MCF 10A (cell line): ENCODE measurements at regions of chr9 and their contacts with region 1.

Region 1: DNA sequence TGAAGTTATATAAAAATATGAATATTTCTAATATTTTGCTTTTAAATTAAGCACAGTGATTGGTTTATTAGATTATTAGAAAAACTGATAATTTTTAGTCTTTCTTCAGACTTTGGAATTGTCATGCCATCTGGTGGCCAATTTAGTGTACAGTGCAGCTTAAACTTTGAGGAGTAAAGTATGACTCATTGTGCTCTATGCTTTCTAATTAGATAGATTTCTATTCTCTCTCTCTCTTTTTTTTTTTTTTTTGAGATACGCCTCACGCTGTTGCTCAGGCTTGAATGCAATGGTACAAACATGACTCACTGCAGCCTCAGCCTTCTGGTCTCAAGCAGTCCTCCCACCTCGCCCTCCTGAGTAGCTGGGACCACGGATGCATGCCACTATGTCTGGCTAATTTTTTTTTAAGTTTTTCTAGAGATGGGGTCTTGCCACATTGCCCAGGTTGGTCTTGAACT is 42.1 kb upstream of the GPR21 start:
- DNase-seq: peak; percentile 79
- H3K4me3 Mint-ChIP-seq: no peak overlapping the region
- H3K27ac Mint-ChIP-seq: no peak overlapping the region
- H3K4me1 Mint-ChIP-seq: no peaks in the 10 kb centered on the region
- H3K27me3 Mint-ChIP-seq: no peaks in the 10 kb centered on the region
- CTCF ChIP-seq: peak; percentile 68

Region 2: DNA sequence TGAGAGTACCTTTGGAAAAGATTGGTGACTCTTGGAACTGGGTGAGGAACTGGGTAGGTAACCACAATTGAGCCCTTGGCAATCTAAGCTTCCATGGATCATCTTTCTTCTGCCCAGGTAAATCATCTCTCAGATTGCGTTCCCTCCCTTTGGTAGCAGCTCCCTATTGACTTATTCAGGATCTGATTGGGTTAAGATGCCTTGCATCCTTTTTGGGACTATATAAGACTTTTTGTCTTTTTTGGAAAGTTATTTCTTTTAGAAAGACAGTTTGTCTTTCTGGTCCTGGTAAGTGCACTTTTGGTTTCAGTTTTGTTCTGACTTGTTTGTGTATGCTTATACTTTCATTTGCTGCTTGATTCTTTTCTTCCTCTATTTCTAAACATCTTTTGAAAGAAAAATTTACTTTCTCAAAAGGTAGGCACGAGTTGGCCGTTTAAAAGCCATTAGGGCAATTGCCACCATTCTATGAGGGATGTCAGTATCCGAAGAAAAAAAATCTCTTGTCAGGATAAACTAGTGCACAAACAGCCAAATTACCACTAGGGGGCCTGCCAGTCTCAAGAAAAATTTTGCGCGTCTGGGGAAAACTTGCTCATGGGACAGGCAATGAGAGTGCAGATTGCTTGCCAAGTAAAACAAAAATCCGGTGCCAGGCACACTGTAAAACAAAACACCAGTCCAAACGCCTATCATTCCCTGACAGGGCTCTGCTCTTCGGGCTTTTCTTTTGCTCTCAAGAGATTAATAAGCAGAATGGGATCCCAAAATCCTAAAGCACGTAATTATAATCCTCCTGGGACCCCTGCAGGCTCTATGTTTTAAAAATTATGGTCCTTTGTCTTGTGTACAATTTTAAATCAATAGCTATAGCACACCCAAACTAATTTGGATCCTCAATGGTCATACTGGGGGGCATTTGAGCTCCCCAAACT is 526.5 kb before region 1 on chr9:
- CTCF ChIA-PET with region 1: no interaction called
- POLR2A ChIA-PET with region 1: no interaction called
- intact Hi-C with region 1: loop called (anchors 1 kb)
- DNase-seq: peak; percentile 95
- H3K4me3 Mint-ChIP-seq: peak overlapping the region; percentile 71
- H3K27ac Mint-ChIP-seq: peak overlapping the region; percentile 41
- H3K4me1 Mint-ChIP-seq: peaks cover 5% of the 10 kb centered on the region
- H3K27me3 Mint-ChIP-seq: peaks cover 71% of the 10 kb centered on the region
- CTCF ChIP-seq: peak; percentile 78

Region 3: GRCh38 chr9:122827761-122828093 is 163.7 kb before region 1 on chr9:
- CTCF ChIA-PET with region 1: interaction called, 5 read pairs
- POLR2A ChIA-PET with region 1: no interaction called
- intact Hi-C with region 1: loop called (anchors 5 kb)
- DNase-seq: no peak
- H3K4me3 Mint-ChIP-seq: peak overlapping the region; percentile 83
- H3K27ac Mint-ChIP-seq: peak overlapping the region; percentile 81
- H3K4me1 Mint-ChIP-seq: peaks cover 10% of the 10 kb centered on the region
- H3K27me3 Mint-ChIP-seq: no peaks in the 10 kb centered on the region
- CTCF ChIP-seq: no peak

Region 4: DNA sequence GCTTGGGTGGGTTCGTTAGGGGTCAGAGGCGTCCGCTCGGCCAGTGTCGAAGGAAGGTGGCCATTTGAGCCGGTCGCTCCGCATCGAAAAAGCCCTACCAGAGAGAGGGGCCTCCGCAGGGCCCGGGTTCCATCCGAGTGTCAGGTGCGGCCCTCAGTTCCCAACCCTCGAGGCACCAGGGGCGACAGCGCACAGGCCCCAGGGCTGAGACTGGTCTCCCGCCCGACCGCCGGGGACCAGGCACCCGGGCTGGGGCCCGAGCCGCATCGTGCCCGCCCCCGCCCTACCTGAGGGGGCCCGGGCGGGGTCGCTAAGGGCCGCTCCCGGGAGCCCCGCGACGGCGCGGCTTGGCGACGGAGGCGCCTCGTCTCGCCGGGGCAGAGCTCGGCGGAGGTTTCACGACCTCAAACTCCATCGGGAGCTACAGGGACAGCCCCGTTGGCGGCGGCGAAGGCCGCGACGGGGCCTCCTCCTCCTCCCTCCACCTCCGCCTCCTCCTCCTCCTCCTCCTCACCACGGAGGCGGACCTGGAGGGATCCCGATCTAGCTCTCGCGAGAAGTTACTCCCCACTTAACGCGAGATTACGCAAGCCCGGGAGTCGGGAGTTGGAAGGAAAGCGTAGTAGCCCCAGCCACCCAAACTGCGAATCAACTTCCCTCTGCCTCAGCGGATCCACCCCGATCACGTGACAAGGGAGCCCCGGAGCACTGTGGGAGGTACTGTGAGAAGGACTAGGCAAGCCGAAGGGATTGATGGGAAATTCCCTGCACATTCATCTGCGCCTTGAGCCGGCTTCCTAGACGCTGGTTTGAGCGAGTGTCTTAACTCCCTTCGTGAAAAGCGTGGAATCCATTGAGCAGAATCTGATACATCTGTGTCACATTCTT is 86.3 kb before region 1 on chr9 and contains the start of gene RC3H2:
- CTCF ChIA-PET with region 1: interaction called, 6 read pairs
- POLR2A ChIA-PET with region 1: interaction called, 21 read pairs
- intact Hi-C with region 1: loop called (anchors 1 kb)
- DNase-seq: peak; percentile 100
- H3K4me3 Mint-ChIP-seq: peak within 1 kb of the TSS; percentile 89
- H3K27ac Mint-ChIP-seq: peak within 1 kb of the TSS; percentile 92
- H3K4me1 Mint-ChIP-seq: peaks cover 9% of the 10 kb centered on the region
- H3K27me3 Mint-ChIP-seq: no peaks in the 10 kb centered on the region
- CTCF ChIP-seq: no peak
- total RNA-seq, gene RC3H2: 52.4 and 59.1 TPM in 2 replicates

Region 5: DNA sequence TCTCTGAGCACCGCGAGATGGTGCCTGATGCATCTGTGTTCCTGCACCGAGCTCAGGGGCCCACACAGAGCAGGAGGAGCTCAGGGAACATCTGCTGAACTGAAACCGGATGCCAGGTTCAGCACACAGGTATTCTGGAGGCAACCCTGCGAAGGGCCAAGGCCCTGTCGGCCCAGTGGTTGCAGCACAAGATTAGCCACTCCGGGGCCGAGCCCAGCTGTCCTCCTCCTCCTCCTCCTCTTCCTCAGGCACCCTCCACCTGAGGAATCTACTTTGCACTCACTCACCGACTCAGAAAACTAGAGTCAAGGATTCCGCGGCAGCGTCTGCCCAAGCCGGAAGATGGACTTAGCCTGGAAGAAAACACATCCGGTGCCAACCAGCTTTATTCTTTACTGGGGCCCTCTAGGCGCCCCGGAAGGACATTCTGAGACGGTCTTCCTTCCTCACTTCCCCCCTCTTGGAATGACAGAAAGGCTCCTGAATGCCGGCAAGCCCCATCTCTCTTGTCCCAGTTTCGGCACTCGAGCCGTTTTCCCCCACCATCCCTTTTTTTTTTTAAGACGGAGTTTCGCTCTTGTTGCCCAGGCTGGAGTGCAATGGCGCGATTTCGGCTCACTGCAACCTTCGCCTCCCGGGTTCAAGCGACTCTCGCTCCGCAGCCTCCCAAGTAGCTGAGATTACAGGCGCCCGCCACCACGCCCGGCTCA is 78.3 kb before region 1 on chr9 and contains the start of gene ZBTB6:
- CTCF ChIA-PET with region 1: interaction called, 14 read pairs
- POLR2A ChIA-PET with region 1: interaction called, 6 read pairs
- intact Hi-C with region 1: loop called (anchors 1 kb)
- DNase-seq: peak; percentile 89
- H3K4me3 Mint-ChIP-seq: peak within 1 kb of the TSS; percentile 97
- H3K27ac Mint-ChIP-seq: peak within 1 kb of the TSS; percentile 94
- H3K4me1 Mint-ChIP-seq: peaks cover 17% of the 10 kb centered on the region
- H3K27me3 Mint-ChIP-seq: no peaks in the 10 kb centered on the region
- CTCF ChIP-seq: no peak
- total RNA-seq, gene ZBTB6: 8.5 and 10.4 TPM in 2 replicates

Region 6: GRCh38 chr9:122931226-122932121 is 59.9 kb before region 1 on chr9 and contains the start of gene ZBTB26:
- CTCF ChIA-PET with region 1: interaction called, 5 read pairs
- POLR2A ChIA-PET with region 1: interaction called, 17 read pairs
- intact Hi-C with region 1: loop called (anchors 1 kb)
- DNase-seq: peak; percentile 97
- H3K4me3 Mint-ChIP-seq: no peak within 1 kb of the TSS
- H3K27ac Mint-ChIP-seq: no peak within 1 kb of the TSS
- H3K4me1 Mint-ChIP-seq: peaks cover 5% of the 10 kb centered on the region
- H3K27me3 Mint-ChIP-seq: no peaks in the 10 kb centered on the region
- CTCF ChIP-seq: no peak
- total RNA-seq, gene ZBTB26: 4.0 and 5.7 TPM in 2 replicates

Region 7: DNA sequence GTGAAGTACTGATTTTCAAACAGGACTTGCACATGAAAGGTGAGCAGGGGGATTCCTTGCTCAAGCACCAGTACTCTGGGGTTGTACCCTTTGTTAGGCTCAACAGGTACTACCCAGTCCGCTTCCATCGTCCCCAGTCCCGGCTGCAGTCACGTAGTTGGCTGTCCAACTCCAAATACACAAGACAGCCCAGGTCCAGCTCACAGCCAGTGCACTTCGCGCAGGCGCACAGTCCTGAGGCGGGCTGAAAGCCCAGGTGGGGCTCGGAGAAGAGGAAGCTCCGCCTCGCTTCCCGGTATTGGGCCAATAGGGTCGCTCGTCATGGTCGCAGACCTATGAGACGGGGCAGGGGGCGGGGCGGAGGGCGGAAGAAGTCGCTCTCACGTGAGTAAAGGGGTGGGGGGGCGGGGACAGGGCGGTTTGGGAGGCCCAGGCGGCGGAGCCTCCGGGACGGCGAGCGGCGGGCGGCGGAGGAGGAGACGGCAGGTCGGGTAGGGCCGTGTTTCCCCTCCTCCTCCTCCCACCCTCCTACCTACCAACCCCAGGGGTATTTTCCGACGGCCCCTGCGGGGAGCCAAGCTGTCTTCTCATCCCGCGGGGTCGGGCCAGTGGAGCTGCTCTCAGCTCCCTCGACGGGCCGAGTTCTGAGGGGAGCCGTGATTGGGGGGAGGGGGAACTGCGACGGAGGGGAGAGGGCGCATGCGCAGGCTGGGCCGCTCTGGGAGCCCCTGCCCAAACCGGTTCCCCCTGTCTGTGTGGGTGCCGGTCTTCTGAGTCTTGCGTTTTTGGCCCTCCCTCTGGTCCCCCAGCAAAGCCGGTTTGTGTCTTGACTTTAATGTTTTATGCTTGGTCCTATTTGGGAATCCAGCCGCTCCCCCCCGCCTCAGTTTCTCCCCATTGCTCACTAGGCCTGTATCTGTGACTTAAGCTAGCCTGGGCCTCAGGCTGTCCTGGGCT is 50.5 kb before region 1 on chr9 and contains the start of gene RABGAP1:
- CTCF ChIA-PET with region 1: interaction called, 9 read pairs
- POLR2A ChIA-PET with region 1: interaction called, 13 read pairs
- intact Hi-C with region 1: no loop called
- DNase-seq: peak; percentile 99
- H3K4me3 Mint-ChIP-seq: peak within 1 kb of the TSS; percentile 91
- H3K27ac Mint-ChIP-seq: peak within 1 kb of the TSS; percentile 85
- H3K4me1 Mint-ChIP-seq: peaks cover 5% of the 10 kb centered on the region
- H3K27me3 Mint-ChIP-seq: no peaks in the 10 kb centered on the region
- CTCF ChIP-seq: no peak
- total RNA-seq, gene RABGAP1: 41.1 and 43.1 TPM in 2 replicates